ENCODE measurements at regions of chrX and their contacts with region 1.

Region 1: DNA sequence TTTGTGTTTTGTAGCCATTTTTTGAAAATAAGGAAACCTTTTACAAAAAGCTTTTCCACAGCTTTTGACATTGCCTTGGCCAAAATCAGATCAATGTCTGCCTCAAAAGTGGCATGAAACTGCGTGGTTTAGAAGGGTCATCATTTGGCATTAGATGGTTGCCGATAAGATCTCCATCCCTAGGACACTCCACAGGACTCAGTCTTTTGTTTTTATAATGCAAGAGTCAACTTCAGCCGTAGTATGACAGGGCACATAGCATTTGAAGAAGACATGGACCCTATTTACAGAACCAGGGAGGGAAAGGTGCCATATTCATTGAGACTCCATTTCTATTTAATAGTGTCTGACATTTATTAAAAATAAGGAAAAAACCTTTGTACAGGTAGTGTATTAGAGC is 1.3 kb downstream of the RTL8A start:
- DNase-seq: no peak
- ATAC-seq: no peak
- H3K4me3 Mint-ChIP-seq: peak overlapping the region; percentile 87
- H3K27ac Mint-ChIP-seq: peak overlapping the region; percentile 74
- H3K4me1 Mint-ChIP-seq: peaks cover 25% of the 10 kb centered on the region
- H3K27me3 Mint-ChIP-seq: no peaks in the 10 kb centered on the region

Region 2: DNA sequence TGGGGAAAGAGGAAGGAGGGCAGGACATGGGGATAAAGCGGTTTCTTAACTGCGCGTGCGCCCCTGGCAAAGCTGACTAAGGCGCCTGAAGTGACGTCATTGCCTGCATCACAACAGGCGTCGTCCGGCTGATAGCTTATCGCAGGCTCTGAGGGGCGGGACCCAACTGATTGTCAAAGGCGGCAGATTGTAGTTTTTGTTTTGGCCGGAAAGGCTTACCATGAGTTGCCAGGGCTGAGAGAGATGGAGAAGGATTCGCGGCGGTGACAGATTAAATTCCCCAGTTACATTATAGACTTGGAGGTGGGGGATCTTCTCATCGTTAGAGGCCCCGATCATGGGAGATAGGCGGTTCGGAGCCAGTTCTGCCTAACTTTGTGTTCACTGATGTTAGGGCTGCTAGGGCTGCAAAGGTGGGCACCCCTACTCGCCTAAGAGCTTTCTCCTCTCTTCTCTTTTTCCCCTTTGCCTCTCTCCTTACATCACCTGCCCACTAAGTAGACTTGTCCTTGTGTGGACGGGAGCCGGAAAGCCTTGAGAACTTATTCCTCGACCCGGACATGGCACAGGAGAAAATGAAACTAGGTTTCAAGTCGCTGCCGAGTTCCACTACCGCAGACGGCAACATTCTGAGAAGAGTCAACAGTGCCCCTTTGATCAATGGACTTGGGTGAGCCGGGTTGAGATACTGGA is 243.4 kb before region 1 on chrX:
- CTCF ChIA-PET with region 1: no interaction called
- POLR2A ChIA-PET with region 1: no interaction called
- intact Hi-C with region 1: loop called in 1 of 2 experiments (anchors 2 kb)
- DNase-seq: peak; percentile 92
- ATAC-seq: peak; percentile 89
- H3K4me3 Mint-ChIP-seq: peak overlapping the region; percentile 82
- H3K27ac Mint-ChIP-seq: peak overlapping the region; percentile 96
- H3K4me1 Mint-ChIP-seq: peaks cover 23% of the 10 kb centered on the region
- H3K27me3 Mint-ChIP-seq: no peaks in the 10 kb centered on the region

Region 3: GRCh38 chrX:134898440-134898839 is 152.2 kb before region 1 on chrX:
- CTCF ChIA-PET with region 1: no interaction called
- POLR2A ChIA-PET with region 1: no interaction called
- intact Hi-C with region 1: no loop called
- DNase-seq: no peak
- ATAC-seq: no peak
- H3K4me3 Mint-ChIP-seq: no peak overlapping the region
- H3K27ac Mint-ChIP-seq: no peak overlapping the region
- H3K4me1 Mint-ChIP-seq: no peaks in the 10 kb centered on the region
- H3K27me3 Mint-ChIP-seq: no peaks in the 10 kb centered on the region

Region 4: DNA sequence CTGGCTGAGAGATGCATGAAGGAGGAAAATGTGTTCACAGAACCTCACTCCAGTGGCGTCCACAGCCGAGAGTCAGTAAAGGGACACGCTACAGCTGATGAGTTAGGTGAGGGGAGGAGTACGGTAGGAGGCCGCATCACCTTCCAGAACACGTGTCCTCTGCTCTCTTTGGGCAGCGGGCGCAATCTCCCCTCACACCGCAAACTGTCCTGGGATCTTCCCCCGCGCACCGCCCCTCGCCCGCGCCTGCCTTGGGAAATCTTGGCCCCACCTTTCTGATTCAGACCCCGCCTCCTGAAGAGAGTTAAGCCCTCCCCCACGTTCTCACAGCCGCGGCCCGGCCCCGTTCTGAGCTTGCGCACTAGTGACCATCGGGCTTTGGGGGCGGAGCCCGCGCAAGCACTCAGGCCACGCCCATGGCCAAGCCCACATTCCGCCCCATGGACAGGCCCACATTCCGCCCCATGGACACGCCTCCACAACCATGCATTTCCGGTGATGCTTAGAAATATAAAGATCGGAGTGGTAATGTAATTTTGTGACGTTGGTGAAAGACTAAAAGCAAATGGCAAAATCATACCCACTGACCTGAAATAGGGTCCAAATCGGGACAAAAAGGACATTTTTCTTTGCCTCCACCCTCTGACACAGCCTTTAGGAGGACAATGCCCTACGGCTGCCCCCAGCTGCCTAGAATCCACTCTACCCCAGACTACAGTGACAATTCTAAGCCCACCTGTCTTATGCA is 46.6 kb before region 1 on chrX:
- CTCF ChIA-PET with region 1: interaction called, 3 read pairs
- POLR2A ChIA-PET with region 1: interaction called, 3 read pairs
- intact Hi-C with region 1: loop called (anchors 1 to 2 kb)
- DNase-seq: peak; percentile 94
- ATAC-seq: peak; percentile 98
- H3K4me3 Mint-ChIP-seq: peak overlapping the region; percentile 78
- H3K27ac Mint-ChIP-seq: peak overlapping the region; percentile 69
- H3K4me1 Mint-ChIP-seq: peaks cover 14% of the 10 kb centered on the region
- H3K27me3 Mint-ChIP-seq: no peaks in the 10 kb centered on the region

Region 5: GRCh38 chrX:135099493-135099783 is 48.8 kb after region 1 on chrX:
- CTCF ChIA-PET with region 1: no interaction called
- POLR2A ChIA-PET with region 1: no interaction called
- intact Hi-C with region 1: no loop called
- DNase-seq: no peak
- ATAC-seq: no peak
- H3K4me3 Mint-ChIP-seq: peak overlapping the region; percentile 64
- H3K27ac Mint-ChIP-seq: no peak overlapping the region
- H3K4me1 Mint-ChIP-seq: peaks cover 8% of the 10 kb centered on the region
- H3K27me3 Mint-ChIP-seq: peaks cover 6% of the 10 kb centered on the region